ENCODE measurements at regions of chr5 and their contacts with region 1.

Region 1: DNA sequence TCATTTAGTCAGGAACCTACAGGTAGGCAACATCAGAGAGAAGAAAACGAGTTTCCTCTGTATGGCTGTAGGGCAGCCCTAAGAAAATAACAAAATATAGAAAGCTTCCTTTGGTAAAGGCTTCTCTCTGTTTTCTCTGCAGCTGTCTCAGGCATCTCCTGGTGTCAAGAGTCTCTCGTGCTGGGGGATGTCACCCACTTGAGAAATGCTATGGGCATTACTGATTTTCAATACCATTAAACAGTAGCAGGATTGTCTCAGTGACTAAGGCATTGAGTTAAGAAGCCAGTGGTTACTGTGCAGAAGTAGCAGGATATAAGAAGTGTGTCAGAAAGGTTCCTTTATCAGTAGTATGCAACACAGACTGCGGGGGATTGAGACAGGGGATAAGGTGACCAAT is 32.4 kb downstream of the LIFR start:
- DNase-seq: no peak
- H3K4me3 ChIP-seq: no peak overlapping the region
- H3K27ac ChIP-seq: no peak overlapping the region
- H3K4me1 ChIP-seq: no peaks in the 10 kb centered on the region
- H3K27me3 ChIP-seq: no peaks in the 10 kb centered on the region
- CTCF ChIP-seq: no peak

Region 2: DNA sequence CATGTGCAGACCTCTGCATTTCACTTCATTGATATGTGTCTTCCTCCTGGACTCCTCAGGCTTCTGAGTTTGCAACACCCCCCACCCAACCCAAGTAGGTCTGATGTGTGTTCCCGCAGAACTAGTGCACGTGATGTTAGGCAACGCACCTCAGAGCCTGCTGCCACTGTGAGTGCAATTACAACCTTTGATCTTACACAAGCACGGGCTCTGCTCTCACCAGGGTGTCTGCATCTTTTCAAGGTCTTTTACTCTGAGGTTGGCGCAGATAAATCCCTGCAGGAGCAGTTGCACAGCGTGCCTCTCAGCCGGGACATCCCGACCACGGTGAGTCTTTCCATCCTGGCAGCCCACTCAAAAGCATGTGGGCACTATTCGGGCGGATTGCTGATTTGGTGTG is 185.6 kb before region 1 on chr5:
- CTCF ChIA-PET with region 1: no interaction called
- dilution Hi-C with region 1: no loop called
- in situ Hi-C with region 1: no loop called
- intact Hi-C with region 1: no loop called
- DNase-seq: no peak
- H3K4me3 ChIP-seq: no peak overlapping the region
- H3K27ac ChIP-seq: no peak overlapping the region
- H3K4me1 ChIP-seq: peaks cover 7% of the 10 kb centered on the region
- H3K27me3 ChIP-seq: no peaks in the 10 kb centered on the region
- CTCF ChIP-seq: no peak

Region 3: DNA sequence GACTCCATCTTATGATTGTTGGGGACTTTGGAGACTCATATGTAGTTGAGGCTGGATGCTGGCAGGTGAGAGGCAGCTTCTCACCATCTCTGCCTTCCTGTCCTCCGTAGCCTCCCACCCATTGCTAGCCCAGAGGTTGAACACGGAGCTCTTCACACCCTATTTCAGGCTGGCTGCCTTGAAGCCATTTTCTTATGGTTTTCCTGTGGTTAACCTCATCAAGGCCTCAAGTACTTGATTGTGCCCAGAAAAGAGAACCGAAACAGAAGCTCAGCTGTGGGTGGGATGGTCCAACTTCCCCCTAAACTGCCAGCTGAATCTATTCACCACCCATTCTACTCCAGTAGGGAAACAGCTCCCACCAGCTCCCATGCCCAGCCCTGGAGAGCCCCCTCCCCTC is 70.5 kb before region 1 on chr5:
- CTCF ChIA-PET with region 1: no interaction called
- dilution Hi-C with region 1: no loop called
- in situ Hi-C with region 1: no loop called
- intact Hi-C with region 1: no loop called
- DNase-seq: no peak
- H3K4me3 ChIP-seq: no peak overlapping the region
- H3K27ac ChIP-seq: no peak overlapping the region
- H3K4me1 ChIP-seq: peaks cover 12% of the 10 kb centered on the region
- H3K27me3 ChIP-seq: no peaks in the 10 kb centered on the region
- CTCF ChIP-seq: no peak

Region 4: GRCh38 chr5:38473008-38473407 is 51.0 kb before region 1 on chr5:
- CTCF ChIA-PET with region 1: no interaction called
- dilution Hi-C with region 1: loop called (anchors 5 kb)
- in situ Hi-C with region 1: no loop called
- intact Hi-C with region 1: no loop called
- DNase-seq: no peak
- H3K4me3 ChIP-seq: no peak overlapping the region
- H3K27ac ChIP-seq: no peak overlapping the region
- H3K4me1 ChIP-seq: peaks cover 12% of the 10 kb centered on the region
- H3K27me3 ChIP-seq: no peaks in the 10 kb centered on the region
- CTCF ChIP-seq: no peak